ENCODE measurements at regions of chr9 and their contacts with region 1.

Region 1: GRCh38 chr9:119556129-119556875 is 187.1 kb upstream of the BRINP1 start:
- DNase-seq: peak; percentile 59 to 93
- H3K4me3 ChIP-seq: peak overlapping the region in 3 of 4 experiments; percentile 18 to 42 (median 36); a peak in 6 of 8 replicates
- H3K27ac ChIP-seq: no peak overlapping the region
- H3K4me1 ChIP-seq: peaks cover 0 to 5% (median 0%) of the 10 kb centered on the region in 4 experiments; a peak in 3 of 7 replicates
- H3K27me3 ChIP-seq: no peaks in the 10 kb centered on the region
- CTCF ChIP-seq: peak; percentile 88 to 94 (median 93)
- EP300 ChIP-seq: 0 out of 3 replicates have a peak, but pooled peaks of 1 of the 2 experiments have one; percentile 43
- POLR2A ChIP-seq: no peak
- RAD21 ChIP-seq: peak; percentile 89 to 92

Region 2: DNA sequence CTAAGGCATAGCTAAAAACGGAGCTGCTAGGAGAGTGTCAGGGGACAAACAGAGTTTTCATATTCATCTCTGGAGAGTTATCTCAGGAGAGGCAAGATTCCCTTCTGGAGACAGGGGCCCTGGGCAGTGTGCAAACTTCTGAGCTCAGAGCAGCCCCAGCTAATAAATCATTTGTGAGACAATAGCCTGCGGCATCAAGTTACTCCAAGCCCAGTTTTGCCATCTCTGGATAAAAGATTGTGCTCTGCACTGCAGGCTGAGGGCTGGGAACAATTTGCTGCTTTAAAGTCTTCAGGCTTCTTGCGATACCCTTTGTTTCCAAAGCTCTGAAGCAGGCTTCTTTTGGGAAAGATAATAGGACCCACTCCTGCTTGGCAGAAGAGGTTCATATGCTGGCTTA is 22.8 kb before region 1 on chr9:
- CTCF ChIA-PET with region 1: interaction called, 12 read pairs
- POLR2A ChIA-PET with region 1: no interaction called
- DNase-seq: no peak
- H3K4me3 ChIP-seq: no peak overlapping the region
- H3K27ac ChIP-seq: no peak overlapping the region
- H3K4me1 ChIP-seq: peaks cover 1 to 8% (median 4%) of the 10 kb centered on the region in 4 experiments; a peak in 4 of 7 replicates
- H3K27me3 ChIP-seq: no peaks in the 10 kb centered on the region
- CTCF ChIP-seq: no peak
- EP300 ChIP-seq: no peak
- POLR2A ChIP-seq: no peak
- RAD21 ChIP-seq: no peak

Region 3: DNA sequence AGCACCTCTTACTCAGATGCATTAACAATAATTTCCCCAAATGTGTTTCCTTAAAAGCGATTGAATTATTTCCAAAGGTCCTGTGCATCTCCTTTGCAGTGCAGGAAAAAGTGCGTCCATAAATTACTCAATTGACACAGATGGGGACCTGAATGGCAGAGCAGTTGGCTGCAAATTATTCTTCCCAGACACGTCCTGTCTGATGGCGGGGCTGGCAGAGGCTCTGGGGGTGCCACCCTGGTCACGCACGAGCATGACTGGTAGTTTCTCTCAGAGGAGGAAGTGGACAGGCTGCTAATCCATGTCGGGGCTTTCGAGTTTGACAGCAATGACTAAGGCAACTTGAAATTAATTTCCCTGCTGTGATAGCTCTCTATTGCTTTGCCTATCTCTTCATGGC is 77.7 kb after region 1 on chr9:
- CTCF ChIA-PET with region 1: interaction called, 10 read pairs
- POLR2A ChIA-PET with region 1: no interaction called
- DNase-seq: no peak
- H3K4me3 ChIP-seq: no peak overlapping the region
- H3K27ac ChIP-seq: no peak overlapping the region
- H3K4me1 ChIP-seq: no peaks in the 10 kb centered on the region
- H3K27me3 ChIP-seq: no peaks in the 10 kb centered on the region
- CTCF ChIP-seq: no peak
- EP300 ChIP-seq: no peak
- POLR2A ChIP-seq: no peak
- RAD21 ChIP-seq: no peak

Region 4: DNA sequence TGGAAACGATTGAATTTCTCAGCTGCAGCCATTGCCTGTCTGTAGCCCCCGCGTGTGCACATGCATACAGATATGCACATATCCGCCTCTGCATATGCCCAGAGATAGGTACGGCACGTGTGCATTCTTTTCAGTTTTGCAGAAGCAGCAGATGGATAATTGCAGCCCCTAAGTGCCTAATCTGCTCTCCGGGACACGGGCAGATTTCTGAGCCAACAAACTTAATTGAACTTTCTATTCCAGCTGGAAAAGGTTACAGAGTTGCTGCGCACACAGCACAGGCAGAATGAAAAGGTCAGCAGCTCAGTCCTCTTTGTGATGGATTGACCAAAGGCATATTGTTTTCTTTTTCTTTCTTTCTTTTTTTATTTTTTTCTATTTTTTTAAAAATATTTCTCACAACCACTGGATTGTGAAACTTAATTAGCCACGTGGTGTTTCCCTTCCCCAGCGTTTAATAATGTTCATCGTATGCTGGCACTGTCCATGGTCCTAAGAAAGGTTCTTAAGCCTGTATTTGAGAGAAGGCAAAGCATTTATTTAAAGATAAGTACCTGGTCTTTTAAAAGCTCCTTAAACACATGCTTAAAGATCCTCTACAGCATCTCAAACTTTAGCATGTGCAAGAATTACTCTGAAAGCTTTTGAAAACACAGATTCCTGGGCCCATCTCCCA is 83.1 kb after region 1 on chr9:
- CTCF ChIA-PET with region 1: interaction called, 10 read pairs
- POLR2A ChIA-PET with region 1: no interaction called
- DNase-seq: no peak
- H3K4me3 ChIP-seq: no peak overlapping the region
- H3K27ac ChIP-seq: no peak overlapping the region
- H3K4me1 ChIP-seq: no peaks in the 10 kb centered on the region
- H3K27me3 ChIP-seq: no peaks in the 10 kb centered on the region
- CTCF ChIP-seq: no peak
- EP300 ChIP-seq: no peak
- POLR2A ChIP-seq: no peak
- RAD21 ChIP-seq: no peak

Region 5: DNA sequence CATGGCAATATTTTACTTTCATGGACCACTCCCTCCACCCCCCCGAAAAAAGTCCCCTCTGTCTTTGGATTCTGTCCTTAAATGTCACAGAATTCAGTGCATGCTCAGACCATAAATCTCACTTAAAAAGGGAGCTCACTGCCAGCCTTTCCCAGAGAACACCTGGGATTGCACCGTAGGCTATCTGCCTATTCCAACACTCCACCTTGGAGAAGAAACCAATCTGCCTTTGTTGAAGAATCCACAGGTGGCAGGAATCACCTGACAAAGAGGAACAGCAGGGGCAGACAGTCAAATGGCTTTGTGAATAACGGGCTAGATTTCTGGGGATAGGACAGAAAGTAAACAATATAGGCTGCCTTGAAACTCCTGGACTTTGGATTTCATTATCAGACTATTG is 119.6 kb after region 1 on chr9:
- CTCF ChIA-PET with region 1: no interaction called
- POLR2A ChIA-PET with region 1: no interaction called
- DNase-seq: no peak
- H3K4me3 ChIP-seq: no peak overlapping the region
- H3K27ac ChIP-seq: no peak overlapping the region
- H3K4me1 ChIP-seq: peaks cover 0 to 12% (median 1%) of the 10 kb centered on the region in 4 experiments; a peak in 3 of 7 replicates
- H3K27me3 ChIP-seq: no peaks in the 10 kb centered on the region
- CTCF ChIP-seq: no peak
- EP300 ChIP-seq: no peak
- POLR2A ChIP-seq: no peak
- RAD21 ChIP-seq: no peak

Region 6: GRCh38 chr9:119968836-119969707 is 412.8 kb after region 1 on chr9:
- CTCF ChIA-PET with region 1: interaction called, 12 read pairs
- POLR2A ChIA-PET with region 1: no interaction called
- DNase-seq: peak; percentile 56 to 85
- H3K4me3 ChIP-seq: no peak overlapping the region
- H3K27ac ChIP-seq: no peak overlapping the region
- H3K4me1 ChIP-seq: peaks cover 0 to 5% (median 4%) of the 10 kb centered on the region in 4 experiments; a peak in 3 of 7 replicates
- H3K27me3 ChIP-seq: no peaks in the 10 kb centered on the region
- CTCF ChIP-seq: peak; percentile 87 to 90 (median 89)
- EP300 ChIP-seq: no peak
- POLR2A ChIP-seq: no peak
- RAD21 ChIP-seq: peak; percentile 79 to 90

Region 7: GRCh38 chr9:120348951-120349429 is 792.7 kb after region 1 on chr9:
- CTCF ChIA-PET with region 1: interaction called, 11 read pairs
- POLR2A ChIA-PET with region 1: no interaction called
- DNase-seq: peak; percentile 47 to 70
- H3K4me3 ChIP-seq: peak overlapping the region in 1 of 4 experiments; percentile 29; a peak in 1 of 8 replicates
- H3K27ac ChIP-seq: no peak overlapping the region
- H3K4me1 ChIP-seq: peaks cover 3 to 12% (median 5%) of the 10 kb centered on the region in 4 experiments; a peak in 6 of 7 replicates
- H3K27me3 ChIP-seq: no peaks in the 10 kb centered on the region
- CTCF ChIP-seq: peak; percentile 74 to 88 (median 81)
- EP300 ChIP-seq: 0 out of 3 replicates have a peak, but pooled peaks of 1 of the 2 experiments have one; percentile 5
- POLR2A ChIP-seq: no peak
- RAD21 ChIP-seq: peak; percentile 91 to 93

Measured in H1 (cell line).